Dendritic cell treated with granulocyte-macrophage colony-stimulating factor and Interleukin-4, amounts not matched to agents 40 ng/mL and 50 ng/mL, for 4 days (primary cell): ENCODE measurements at regions of chr17 and their contacts with region 1.

Region 1: GRCh38 chr17:19648475-19649406 is at the start of gene ALDH3A2:
- H3K4me3 Mint-ChIP-seq: peak within 1 kb of the TSS; percentile 98
- H3K27ac Mint-ChIP-seq: peak within 1 kb of the TSS; percentile 99
- H3K4me1 Mint-ChIP-seq: peaks cover 61% of the 10 kb centered on the region
- H3K27me3 Mint-ChIP-seq: no peaks in the 10 kb centered on the region

Region 2: GRCh38 chr17:19248928-19249574 is 399.7 kb before region 1 on chr17:
- intact Hi-C with region 1: no loop called
- H3K4me3 Mint-ChIP-seq: no peak overlapping the region
- H3K27ac Mint-ChIP-seq: peak overlapping the region; percentile 16
- H3K4me1 Mint-ChIP-seq: peaks cover 12% of the 10 kb centered on the region
- H3K27me3 Mint-ChIP-seq: peaks cover 67% of the 10 kb centered on the region

Region 3: GRCh38 chr17:19579867-19580565 is 68.7 kb before region 1 on chr17:
- intact Hi-C with region 1: loop called (anchors 10 kb)
- H3K4me3 Mint-ChIP-seq: peak overlapping the region; percentile 68
- H3K27ac Mint-ChIP-seq: peak overlapping the region; percentile 63
- H3K4me1 Mint-ChIP-seq: peaks cover 11% of the 10 kb centered on the region
- H3K27me3 Mint-ChIP-seq: peaks cover 39% of the 10 kb centered on the region

Region 4: GRCh38 chr17:19766422-19767270 is 117.9 kb after region 1 on chr17:
- intact Hi-C with region 1: loop called (anchors 2 kb)
- H3K4me3 Mint-ChIP-seq: no peak overlapping the region
- H3K27ac Mint-ChIP-seq: no peak overlapping the region
- H3K4me1 Mint-ChIP-seq: peaks cover 18% of the 10 kb centered on the region
- H3K27me3 Mint-ChIP-seq: peaks cover 13% of the 10 kb centered on the region